Activated naive CD4-positive, alpha-beta T cell treated with anti-CD3 and anti-CD28 coated beads for 36 hours (primary cell): ENCODE measurements at regions of chr22 and their contacts with region 1.

Region 1: GRCh38 chr22:41091132-41092022 is 1.0 kb upstream of the EP300 start:
- DNase-seq: peak; percentile 99
- H3K4me3 Mint-ChIP-seq: peak overlapping the region; percentile 93
- H3K27ac Mint-ChIP-seq: peak overlapping the region; percentile 99
- H3K4me1 Mint-ChIP-seq: peaks cover 25% of the 10 kb centered on the region
- H3K27me3 Mint-ChIP-seq: no peaks in the 10 kb centered on the region

Region 2: GRCh38 chr22:40844951-40845350 is 246.4 kb before region 1 on chr22:
- CTCF ChIA-PET with region 1: no interaction called
- intact Hi-C with region 1: no loop called
- DNase-seq: no peak
- H3K4me3 Mint-ChIP-seq: no peak overlapping the region
- H3K27ac Mint-ChIP-seq: no peak overlapping the region
- H3K4me1 Mint-ChIP-seq: peaks cover 12% of the 10 kb centered on the region
- H3K27me3 Mint-ChIP-seq: no peaks in the 10 kb centered on the region

Region 3: DNA sequence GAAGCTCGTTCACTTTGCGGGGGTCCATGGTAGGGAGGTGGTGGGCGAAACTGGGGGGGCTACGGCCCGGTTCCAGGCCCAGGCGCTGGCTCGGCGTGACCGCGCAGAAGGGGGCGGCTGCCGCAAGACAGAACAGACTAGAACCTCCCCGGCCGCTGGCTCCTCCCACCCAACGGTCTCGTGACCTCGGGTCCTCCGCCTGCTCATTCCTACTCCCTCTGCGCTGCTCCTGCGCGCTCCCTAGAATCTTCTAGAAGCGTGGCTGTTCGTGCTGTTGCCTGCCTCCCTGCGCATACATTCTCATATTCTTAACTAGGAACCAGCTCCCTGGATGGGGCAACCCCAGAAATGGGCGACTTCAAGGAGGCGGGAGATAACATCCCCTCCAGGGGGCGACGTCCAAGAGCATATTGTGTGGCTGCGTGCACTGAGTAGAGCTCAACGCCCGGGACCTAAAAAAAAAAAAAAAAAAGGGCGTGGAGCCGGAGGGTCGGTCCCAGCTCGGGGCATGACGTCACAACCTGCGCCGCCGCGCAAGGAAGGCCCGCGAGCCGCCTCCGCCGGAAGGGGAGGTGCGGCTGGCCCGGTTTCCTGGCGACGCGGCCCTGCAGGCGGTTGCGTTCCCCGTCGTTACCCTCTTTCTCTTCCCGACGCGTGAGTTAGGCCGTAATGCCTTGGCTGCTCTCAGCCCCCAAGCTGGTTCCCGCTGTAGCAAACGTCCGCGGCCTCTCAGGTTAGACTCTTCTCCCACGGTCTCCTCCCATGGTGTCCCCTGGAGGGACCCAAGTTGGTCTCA is 234.7 kb before region 1 on chr22 and contains the starts of genes ST13 and XPNPEP3:
- CTCF ChIA-PET with region 1: no interaction called
- intact Hi-C with region 1: loop called (anchors 5 kb)
- DNase-seq: peak; percentile 98
- H3K4me3 Mint-ChIP-seq: peak within 1 kb of the TSS; percentile 95
- H3K27ac Mint-ChIP-seq: peak within 1 kb of the TSS; percentile 99
- H3K4me1 Mint-ChIP-seq: peaks cover 51% of the 10 kb centered on the region
- H3K27me3 Mint-ChIP-seq: no peaks in the 10 kb centered on the region
- total RNA-seq, gene ST13: 240 to 254 TPM
- total RNA-seq, gene XPNPEP3: 15.7 to 19.6 TPM

Region 4: GRCh38 chr22:41022470-41023298 is 68.7 kb before region 1 on chr22:
- CTCF ChIA-PET with region 1: no interaction called
- intact Hi-C with region 1: loop called (anchors 1 kb)
- DNase-seq: peak; percentile 88
- H3K4me3 Mint-ChIP-seq: peak overlapping the region; percentile 80
- H3K27ac Mint-ChIP-seq: peak overlapping the region; percentile 61
- H3K4me1 Mint-ChIP-seq: peaks cover 16% of the 10 kb centered on the region
- H3K27me3 Mint-ChIP-seq: no peaks in the 10 kb centered on the region

Region 5: GRCh38 chr22:41197038-41197972 is 105.9 kb after region 1 on chr22:
- CTCF ChIA-PET with region 1: no interaction called
- intact Hi-C with region 1: loop called (anchors 1 kb)
- DNase-seq: peak; percentile 77
- H3K4me3 Mint-ChIP-seq: peak overlapping the region; percentile 80
- H3K27ac Mint-ChIP-seq: no peak overlapping the region
- H3K4me1 Mint-ChIP-seq: peaks cover 8% of the 10 kb centered on the region
- H3K27me3 Mint-ChIP-seq: no peaks in the 10 kb centered on the region

Region 6: DNA sequence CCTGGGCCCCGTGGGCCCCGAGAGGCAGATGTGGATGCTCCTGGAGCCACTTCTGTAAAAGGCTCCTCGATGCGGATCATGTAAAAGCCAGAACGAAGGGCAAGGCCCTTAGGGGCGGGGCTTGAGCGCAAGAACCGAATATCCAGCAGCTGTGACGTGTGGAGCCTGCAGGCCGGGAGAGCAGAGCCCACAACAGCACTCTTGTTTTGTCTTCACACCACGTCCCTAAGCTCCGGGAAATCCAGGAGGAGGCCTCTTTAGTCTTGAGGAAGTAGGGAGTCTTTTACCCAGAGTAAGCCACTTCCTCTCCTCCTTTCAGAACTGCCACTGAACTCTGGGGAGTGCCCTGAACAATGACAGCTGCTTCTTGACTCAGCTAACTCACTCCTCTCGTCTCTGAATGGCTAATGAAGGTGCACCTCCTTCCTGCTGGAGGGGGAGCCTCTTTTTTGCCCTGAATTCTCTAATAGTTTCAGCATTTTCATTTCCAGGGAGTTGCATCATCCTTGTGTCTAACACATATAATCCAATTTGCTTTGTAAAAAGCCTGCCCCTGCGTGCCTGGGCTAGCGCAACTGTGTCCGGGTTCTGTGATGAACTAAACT is 126.3 kb after region 1 on chr22:
- CTCF ChIA-PET with region 1: no interaction called
- intact Hi-C with region 1: loop called (anchors 1 kb)
- DNase-seq: peak; percentile 84
- H3K4me3 Mint-ChIP-seq: peak overlapping the region; percentile 63
- H3K27ac Mint-ChIP-seq: peak overlapping the region; percentile 90
- H3K4me1 Mint-ChIP-seq: peaks cover 28% of the 10 kb centered on the region
- H3K27me3 Mint-ChIP-seq: no peaks in the 10 kb centered on the region

Region 7: GRCh38 chr22:41301105-41302020 is 210.0 kb after region 1 on chr22 and contains the start of gene ZC3H7B:
- CTCF ChIA-PET with region 1: no interaction called
- intact Hi-C with region 1: loop called (anchors 5 kb)
- DNase-seq: peak; percentile 88
- H3K4me3 Mint-ChIP-seq: peak within 1 kb of the TSS; percentile 74
- H3K27ac Mint-ChIP-seq: peak within 1 kb of the TSS; percentile 76
- H3K4me1 Mint-ChIP-seq: peaks cover 37% of the 10 kb centered on the region
- H3K27me3 Mint-ChIP-seq: no peaks in the 10 kb centered on the region
- total RNA-seq, gene ZC3H7B: 30.0 to 30.3 TPM

Region 8: GRCh38 chr22:41621099-41621910 is 529.9 kb after region 1 on chr22 and contains the start of gene XRCC6:
- CTCF ChIA-PET with region 1: no interaction called
- intact Hi-C with region 1: loop called (anchors 1 kb)
- DNase-seq: peak; percentile 100
- H3K4me3 Mint-ChIP-seq: peak within 1 kb of the TSS; percentile 98
- H3K27ac Mint-ChIP-seq: peak within 1 kb of the TSS; percentile 98
- H3K4me1 Mint-ChIP-seq: peaks cover 56% of the 10 kb centered on the region
- H3K27me3 Mint-ChIP-seq: no peaks in the 10 kb centered on the region
- total RNA-seq, gene XRCC6: 424 to 436 TPM